Aorta (tissue), 5 donors: ENCODE measurements at regions of chr7 and their contacts with region 1.

Region 1: DNA sequence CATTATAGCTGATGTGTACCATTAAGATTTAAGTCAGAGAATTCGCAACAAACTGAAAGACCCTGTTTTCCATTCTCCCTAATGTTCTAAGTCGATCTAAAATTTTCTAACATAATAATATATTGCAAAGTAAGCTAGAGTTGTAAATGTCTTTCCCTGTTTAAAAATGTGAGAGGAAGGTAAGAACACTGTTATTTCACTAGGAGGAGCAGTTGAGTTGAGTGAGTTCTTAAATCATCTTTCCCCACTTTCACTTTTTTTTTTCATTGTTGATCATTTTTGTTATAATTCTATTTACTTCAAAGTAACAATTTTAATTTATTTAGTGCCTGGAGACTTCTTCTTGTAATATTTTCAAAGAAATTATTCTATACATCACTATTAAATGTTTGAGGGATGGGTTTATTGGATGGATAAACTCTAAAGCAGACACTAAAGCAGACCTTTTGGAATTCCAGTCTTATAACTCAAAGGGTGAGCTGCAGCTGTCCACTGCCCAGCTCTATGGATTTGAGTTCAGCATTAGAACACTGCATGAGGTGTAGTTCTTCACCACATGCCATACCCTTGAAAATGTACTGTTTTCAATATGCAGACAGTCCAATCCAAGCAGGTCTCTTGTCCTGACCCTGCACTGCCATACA is 181.3 kb upstream of the FZD1 start:
- DNase-seq: no peak
- ATAC-seq: peak; percentile 72
- H3K4me3 ChIP-seq: no peak overlapping the region
- H3K27ac ChIP-seq: peak overlapping the region in 1 of 2 donors; percentile 3
- H3K4me1 ChIP-seq: no peaks in the 10 kb centered on the region
- H3K27me3 ChIP-seq: no peaks in the 10 kb centered on the region

Region 2: GRCh38 chr7:91114232-91114631 is 31.3 kb after region 1 on chr7:
- intact Hi-C with region 1: no loop called
- DNase-seq: no peak
- ATAC-seq: no peak
- H3K4me3 ChIP-seq: no peak overlapping the region
- H3K27ac ChIP-seq: no peak overlapping the region
- H3K4me1 ChIP-seq: no peaks in the 10 kb centered on the region
- H3K27me3 ChIP-seq: no peaks in the 10 kb centered on the region

Region 3: DNA sequence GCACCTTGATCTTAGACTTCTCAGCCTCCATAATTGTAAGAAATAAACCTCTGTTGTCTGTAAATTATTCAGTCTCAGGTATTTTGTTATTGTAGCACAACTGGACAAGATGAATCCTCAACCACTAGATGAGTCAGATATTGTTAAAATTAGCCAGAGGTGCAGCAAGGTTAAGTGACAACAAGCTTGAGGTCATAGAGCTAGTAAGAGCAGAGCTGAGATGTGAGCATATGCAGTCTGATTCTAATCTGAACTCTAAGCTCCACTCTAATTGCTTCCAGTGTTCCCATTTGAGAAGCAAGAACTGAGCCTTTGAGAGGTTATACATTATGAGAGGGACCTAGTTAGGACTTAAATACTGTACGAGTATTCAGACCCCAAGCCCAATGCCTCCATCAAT is 274.4 kb after region 1 on chr7:
- intact Hi-C with region 1: no loop called
- DNase-seq: no peak
- ATAC-seq: no peak
- H3K4me3 ChIP-seq: no peak overlapping the region
- H3K27ac ChIP-seq: no peak overlapping the region
- H3K4me1 ChIP-seq: no peaks in the 10 kb centered on the region
- H3K27me3 ChIP-seq: no peaks in the 10 kb centered on the region

Region 4: DNA sequence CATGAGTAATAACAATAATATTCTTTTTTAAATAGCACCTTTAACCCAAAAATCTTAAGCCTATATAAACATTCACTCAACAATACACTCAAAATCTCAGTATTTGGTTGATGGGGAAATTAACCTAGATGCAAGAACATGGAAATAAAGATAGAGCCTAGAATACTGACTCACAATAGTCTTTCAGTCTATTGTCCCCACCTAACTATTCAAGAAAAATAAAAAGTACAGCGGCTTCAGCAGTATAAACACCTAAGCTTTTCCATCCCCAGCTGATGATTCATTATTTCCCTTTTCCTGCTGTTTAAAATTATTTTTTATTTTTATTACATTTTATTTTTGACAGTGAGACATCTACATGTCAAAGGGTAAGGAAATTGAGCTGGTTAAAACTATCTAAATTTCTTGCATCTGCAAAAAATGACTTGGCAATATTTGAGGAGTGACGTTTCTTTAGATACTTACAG is 382.7 kb after region 1 on chr7:
- intact Hi-C with region 1: loop called in 1 of 2 experiments (anchors 5 kb)
- DNase-seq: no peak
- ATAC-seq: no peak
- H3K4me3 ChIP-seq: no peak overlapping the region
- H3K27ac ChIP-seq: no peak overlapping the region
- H3K4me1 ChIP-seq: peaks cover 0 to 7% of the 10 kb centered on the region in 2 donors
- H3K27me3 ChIP-seq: no peaks in the 10 kb centered on the region

Region 5: DNA sequence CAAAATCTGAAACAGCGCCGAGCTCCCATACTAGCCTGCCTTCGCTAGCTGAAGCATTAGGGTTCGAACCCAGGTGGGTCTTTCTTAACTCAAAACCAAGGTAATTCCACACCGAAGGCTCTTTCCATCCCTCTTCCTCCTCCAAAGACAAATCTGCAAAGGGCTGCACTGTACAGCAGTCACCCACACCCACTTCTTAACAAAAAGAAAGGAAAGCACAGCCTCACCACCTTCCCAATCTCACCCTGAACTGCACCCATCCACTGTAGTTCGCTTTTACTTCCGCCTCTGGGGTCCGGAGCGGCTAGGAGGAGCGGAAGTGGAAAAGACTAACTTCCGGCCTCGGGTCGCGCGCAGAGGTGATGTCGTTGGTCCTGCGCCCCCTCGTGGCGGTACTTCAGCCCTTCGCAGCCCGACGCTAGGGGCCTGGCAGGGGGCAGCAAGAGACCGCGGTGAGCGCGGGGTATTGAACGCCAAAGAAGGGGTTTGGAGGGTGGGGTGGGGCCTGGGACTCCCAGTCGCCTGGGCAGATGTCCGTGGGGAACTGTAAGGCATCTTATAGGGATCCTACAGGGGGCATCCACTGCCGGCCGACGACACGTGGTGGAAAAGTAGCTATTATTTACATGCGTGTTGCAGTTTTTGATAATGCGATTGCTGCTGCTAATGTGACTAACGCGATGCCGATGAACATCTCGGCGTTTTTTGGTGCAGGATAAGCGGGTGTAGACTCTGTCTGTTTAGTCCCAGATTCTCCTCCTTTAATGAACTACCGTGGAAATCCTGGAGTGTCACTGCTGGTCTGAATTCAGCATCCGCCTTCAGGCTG is 797.7 kb after region 1 on chr7 and contains the start of gene MTERF1:
- intact Hi-C with region 1: loop called in 1 of 2 experiments (anchors 5 kb)
- DNase-seq: peak; percentile 94 to 98
- ATAC-seq: peak; percentile 99
- H3K4me3 ChIP-seq: peak within 1 kb of the TSS; percentile 87 to 96
- H3K27ac ChIP-seq: no peak within 1 kb of the TSS
- H3K4me1 ChIP-seq: peaks cover 0 to 3% of the 10 kb centered on the region in 2 donors
- H3K27me3 ChIP-seq: no peaks in the 10 kb centered on the region
- total RNA-seq, gene MTERF1: 10.9 to 17.1 TPM